HEK293 (cell line): ENCODE measurements at regions of chr6 and their contacts with region 1.

Region 1: DNA sequence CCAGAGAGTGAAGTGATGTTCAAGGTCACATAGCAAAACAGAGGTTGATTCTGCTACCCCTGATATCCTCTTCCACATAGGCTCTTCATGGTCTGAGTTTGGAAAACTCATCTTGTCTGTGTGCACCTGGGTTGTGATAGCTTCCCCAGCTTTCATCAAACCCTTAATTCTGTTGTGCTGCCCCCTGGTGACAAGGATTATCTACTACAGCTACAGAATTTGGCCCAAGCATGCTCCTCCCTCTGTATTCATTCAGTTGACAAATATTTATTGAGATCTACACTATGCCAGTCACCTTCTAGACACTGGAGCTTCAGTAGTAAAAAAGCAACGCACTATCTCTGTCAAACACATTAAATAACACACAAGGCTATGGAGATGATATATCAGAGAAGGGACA is 50.4 kb downstream of the SMPDL3A start:
- H3K4me3 ChIP-seq: no peak overlapping the region
- H3K27ac ChIP-seq: no peak overlapping the region
- H3K4me1 ChIP-seq: no peaks in the 10 kb centered on the region
- CTCF ChIP-seq: 0 out of 2 replicates have a peak, but pooled peaks have one; percentile 21

Region 2: GRCh38 chr6:122405417-122405816 is 434.1 kb before region 1 on chr6:
- CTCF ChIA-PET with region 1: no interaction called
- POLR2A ChIA-PET with region 1: no interaction called
- H3K4me3 ChIP-seq: no peak overlapping the region
- H3K27ac ChIP-seq: no peak overlapping the region
- H3K4me1 ChIP-seq: peaks cover 34% of the 10 kb centered on the region
- CTCF ChIP-seq: no peak

Region 3: DNA sequence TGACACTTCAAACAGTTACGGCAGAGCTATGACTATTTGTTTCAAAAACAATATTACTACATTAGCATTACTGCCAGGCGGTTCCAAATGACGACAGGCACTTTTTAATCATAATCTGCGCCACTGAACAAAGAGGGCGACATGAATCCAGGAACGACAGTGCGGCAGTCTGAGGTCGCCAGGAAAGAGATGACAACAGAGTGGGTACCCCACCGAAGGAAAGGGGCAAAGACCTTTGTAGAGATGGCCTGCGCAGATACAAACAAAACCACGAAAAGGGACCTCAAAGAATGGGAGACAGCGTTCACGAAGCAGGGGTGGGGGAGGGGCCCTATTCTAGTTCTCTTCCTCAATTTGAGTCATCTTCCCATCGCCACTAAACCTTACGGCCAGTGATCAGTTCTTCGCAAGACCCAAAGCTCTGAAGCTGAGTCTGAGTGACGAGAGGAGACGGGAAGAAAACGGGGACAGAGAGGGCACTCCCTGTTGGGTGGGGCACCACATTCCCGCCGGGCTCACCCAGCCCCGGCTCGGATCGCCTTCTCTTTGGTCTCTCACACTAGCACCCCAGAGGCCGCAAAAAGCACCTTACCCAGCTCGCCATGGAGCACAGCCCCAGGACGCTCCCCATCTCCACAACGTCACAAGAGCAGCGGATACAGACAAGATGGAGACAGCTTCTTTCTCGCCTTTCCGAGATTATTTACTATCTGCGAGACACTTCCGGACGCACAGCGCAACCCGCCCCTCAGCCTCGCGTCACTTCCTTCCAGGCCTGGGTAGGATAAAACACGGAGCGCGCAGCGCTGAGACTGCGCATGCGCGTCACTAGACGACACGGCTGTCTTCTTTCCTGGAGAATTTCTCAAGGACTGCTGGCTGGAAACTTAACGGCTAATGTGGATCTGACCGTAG is 368.1 kb before region 1 on chr6 and contains the start of gene SERINC1:
- CTCF ChIA-PET with region 1: interaction called, 17 read pairs
- POLR2A ChIA-PET with region 1: no interaction called
- H3K4me3 ChIP-seq: peak within 1 kb of the TSS; percentile 66
- H3K27ac ChIP-seq: peak within 1 kb of the TSS; percentile 49
- H3K4me1 ChIP-seq: 0 out of 2 replicates have a peak, but pooled peaks cover 4% of the 10 kb centered on the region
- CTCF ChIP-seq: no peak

Region 4: GRCh38 chr6:122722746-122723145 is 116.7 kb before region 1 on chr6:
- CTCF ChIA-PET with region 1: interaction called, 196 read pairs
- POLR2A ChIA-PET with region 1: no interaction called
- H3K4me3 ChIP-seq: no peak overlapping the region
- H3K27ac ChIP-seq: no peak overlapping the region
- H3K4me1 ChIP-seq: no peaks in the 10 kb centered on the region
- CTCF ChIP-seq: no peak

Region 5: DNA sequence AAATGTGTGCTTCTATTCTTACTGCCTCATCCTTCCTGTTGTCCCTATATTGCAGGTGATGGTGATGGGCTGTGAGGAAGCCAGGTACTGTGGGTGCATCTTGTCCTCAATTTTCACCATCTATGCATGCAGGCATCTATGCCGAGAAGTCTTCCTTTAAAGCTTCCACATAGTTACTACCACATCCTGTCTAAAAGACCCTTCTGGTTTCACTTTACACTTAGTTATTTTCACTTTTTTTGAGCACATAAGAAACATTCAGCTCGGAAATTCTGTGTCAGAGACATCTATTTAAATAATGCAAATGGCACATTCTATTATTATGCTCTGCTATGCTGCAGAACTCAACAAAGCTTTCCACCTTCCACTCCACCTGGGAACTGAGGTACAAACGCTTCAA is 88.2 kb before region 1 on chr6:
- CTCF ChIA-PET with region 1: interaction called, 31 read pairs
- POLR2A ChIA-PET with region 1: no interaction called
- H3K4me3 ChIP-seq: no peak overlapping the region
- H3K27ac ChIP-seq: no peak overlapping the region
- H3K4me1 ChIP-seq: no peaks in the 10 kb centered on the region
- CTCF ChIP-seq: no peak

Region 6: GRCh38 chr6:122798099-122798641 is 41.3 kb before region 1 on chr6:
- CTCF ChIA-PET with region 1: interaction called, 13 read pairs
- POLR2A ChIA-PET with region 1: no interaction called
- H3K4me3 ChIP-seq: no peak overlapping the region
- H3K27ac ChIP-seq: no peak overlapping the region
- H3K4me1 ChIP-seq: peaks cover 3% of the 10 kb centered on the region; the same call in 1 of the 2 replicates
- CTCF ChIP-seq: no peak

Region 7: DNA sequence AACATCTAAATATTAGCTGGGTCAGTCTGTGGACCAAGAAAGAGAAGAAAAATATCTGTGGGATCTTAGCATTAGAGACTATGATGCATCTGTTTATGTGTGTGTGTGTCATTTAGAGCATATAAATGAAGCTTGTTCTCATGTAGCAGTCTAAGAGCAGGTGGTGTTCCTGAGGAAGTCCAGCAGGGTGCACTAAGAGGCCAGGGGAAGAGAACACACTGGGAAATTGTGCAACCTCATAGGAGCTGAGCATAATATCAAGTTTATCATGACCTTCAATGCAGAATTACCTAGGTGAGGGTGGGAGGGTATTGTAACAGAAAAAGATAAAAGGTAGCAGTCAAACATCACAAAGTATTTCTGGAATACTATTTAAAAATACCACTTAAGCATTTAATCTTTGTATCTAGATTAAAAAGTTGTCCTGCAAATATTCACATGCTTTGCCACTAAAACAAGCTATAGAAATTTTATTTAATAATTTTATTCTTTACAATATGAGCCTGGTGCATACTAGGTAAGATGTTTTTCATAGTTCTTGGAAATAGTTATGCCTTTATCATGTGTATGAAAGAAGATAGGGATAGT is 30.1 kb after region 1 on chr6:
- CTCF ChIA-PET with region 1: interaction called, 10 read pairs
- POLR2A ChIA-PET with region 1: no interaction called
- H3K4me3 ChIP-seq: no peak overlapping the region
- H3K27ac ChIP-seq: no peak overlapping the region
- H3K4me1 ChIP-seq: no peaks in the 10 kb centered on the region
- CTCF ChIP-seq: peak; percentile 59

Region 8: GRCh38 chr6:122887941-122888340 is 48.5 kb after region 1 on chr6:
- CTCF ChIA-PET with region 1: no interaction called
- POLR2A ChIA-PET with region 1: no interaction called
- H3K4me3 ChIP-seq: no peak overlapping the region
- H3K27ac ChIP-seq: no peak overlapping the region
- H3K4me1 ChIP-seq: no peaks in the 10 kb centered on the region
- CTCF ChIP-seq: no peak

Region 9: DNA sequence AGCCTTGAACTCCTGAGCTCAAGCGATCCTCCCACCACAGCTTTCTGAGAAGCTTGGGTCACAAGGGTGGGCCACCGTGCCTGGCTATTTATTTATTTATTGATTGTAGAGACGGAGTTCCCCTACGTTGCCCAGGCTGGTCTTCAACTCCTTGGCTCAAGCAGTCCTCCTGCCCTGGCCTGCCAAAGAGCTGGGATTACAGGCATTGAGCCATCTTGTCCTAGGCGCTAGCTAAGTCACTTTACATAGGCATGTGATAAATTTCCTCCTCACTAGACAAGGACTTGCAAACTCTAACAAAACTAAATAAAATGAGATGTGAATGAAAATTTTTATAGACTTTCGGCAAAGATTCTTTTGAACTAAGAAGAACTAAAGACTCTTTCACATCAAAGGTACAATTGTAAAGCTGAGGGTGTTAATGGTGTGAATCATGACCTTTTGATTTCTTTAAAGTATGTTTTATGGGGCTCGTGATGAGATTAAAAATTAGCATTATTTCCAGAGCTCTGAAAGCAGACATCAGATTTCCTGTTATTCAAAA is 368.6 kb after region 1 on chr6:
- CTCF ChIA-PET with region 1: no interaction called
- POLR2A ChIA-PET with region 1: no interaction called
- H3K4me3 ChIP-seq: no peak overlapping the region
- H3K27ac ChIP-seq: no peak overlapping the region
- H3K4me1 ChIP-seq: no peaks in the 10 kb centered on the region
- CTCF ChIP-seq: no peak